Left ventricle myocardium superior (tissue), 1 donor: ENCODE measurements at regions of chr1 and their contacts with region 1.

Region 1: DNA sequence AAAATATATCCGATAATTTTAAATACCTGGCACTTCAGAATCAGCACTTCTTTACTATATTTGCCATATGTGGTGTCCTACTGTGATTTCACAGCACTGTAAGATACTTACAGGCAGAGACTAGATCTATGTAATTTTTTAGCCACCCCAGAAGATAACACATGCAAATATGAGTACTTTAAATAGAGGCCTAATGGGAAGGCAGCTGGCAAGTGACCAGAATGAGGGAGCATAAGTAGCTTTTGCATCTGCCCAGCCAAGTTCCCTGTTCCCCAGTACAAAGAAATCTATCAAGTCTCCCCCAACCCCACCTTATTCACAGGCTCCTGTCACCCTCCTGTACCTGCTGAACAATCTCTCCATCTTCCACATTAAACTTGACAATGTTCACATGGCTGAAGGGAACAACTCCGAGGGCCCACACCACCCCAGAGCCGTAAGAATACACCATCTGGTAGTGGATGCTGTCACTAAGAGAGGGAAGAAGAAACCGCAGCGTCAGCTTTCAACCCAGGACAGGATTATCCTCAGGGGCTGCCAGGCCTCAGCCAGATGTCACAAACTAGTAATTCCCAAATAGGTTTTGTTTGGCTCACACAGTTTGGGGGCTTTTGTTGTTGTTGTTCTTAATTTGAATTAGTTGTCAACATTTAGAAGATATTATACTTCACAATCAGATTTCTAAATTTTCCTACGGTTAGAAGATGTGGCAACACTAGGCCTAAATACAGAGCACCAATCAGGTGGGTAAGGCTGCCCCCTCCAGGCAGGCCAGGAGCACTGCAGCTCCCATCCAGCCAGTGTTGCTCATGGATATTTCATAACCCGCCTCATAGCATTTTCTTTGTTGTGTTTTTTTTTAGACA is 10.4 kb downstream of the EMC1 start:
- DNase-seq: peak; percentile 62
- ATAC-seq: peak; percentile 89

Region 2: DNA sequence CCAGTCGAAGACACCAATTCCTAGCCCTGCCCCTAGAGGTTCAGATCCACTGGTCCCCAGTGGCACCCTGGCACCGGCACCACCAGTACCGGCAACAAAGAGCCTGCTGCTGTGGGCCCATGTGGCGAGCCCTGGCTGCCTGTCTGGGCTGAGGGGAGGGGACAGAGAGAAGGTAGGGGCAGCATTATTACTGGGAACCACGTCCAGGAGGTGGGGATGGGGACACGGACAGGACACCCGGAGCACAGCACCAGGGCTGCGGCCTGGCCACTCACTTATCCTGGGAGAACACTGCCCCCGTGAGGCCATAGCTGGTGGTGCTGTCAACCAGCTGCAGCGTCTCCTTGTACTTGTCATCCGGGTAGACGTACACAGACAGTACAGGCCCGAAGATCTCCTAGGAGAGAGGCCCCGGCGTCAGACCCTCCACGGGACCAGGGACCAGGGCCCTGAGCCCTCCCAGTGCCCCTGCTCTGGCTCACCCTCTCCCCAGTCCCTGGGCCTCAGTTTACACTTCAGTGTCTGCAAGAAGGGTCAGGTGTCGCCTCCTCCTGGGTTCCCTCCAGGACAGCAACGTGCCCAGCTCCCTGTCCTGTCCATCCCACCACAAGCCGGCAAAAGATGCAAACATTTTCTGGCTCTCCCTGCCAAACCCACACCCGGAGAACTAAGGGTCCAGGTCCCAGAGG is 365.7 kb before region 1 on chr1:
- intact Hi-C with region 1: loop called (anchors 5 kb)
- DNase-seq: peak; percentile 85
- ATAC-seq: peak; percentile 80

Region 3: DNA sequence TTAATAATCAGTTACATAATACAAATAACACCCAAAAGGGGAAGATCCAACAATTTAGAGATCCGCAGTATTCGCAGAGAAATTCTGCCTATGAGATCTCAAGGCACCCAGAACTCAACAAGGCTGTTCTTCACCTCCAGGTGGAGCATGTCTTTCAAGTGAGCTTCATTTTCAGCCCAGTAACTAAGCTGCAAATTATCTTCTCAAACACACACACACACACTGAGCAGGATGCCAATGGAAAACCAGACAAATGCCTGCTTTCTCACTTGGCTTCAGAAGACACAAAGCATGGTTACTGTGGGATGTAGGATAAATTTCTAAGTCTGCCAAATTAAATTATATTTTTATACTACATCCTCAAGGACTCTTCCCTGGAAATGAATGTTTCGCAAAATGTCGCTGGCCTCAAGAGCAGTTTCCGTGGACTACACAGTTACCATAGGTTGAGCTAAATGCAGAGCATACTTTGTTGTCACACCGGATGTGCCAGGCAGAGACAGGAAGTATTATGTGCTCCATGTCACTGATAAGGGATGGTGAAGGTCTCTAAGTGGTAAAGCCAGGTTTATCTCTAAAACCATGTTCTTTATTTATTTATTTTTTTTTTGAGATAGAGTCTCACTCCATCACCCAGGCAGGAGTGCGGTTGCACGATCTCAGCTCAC is 61.2 kb before region 1 on chr1:
- intact Hi-C with region 1: loop called (anchors 5 kb)
- DNase-seq: no peak
- ATAC-seq: peak; percentile 74

Region 4: DNA sequence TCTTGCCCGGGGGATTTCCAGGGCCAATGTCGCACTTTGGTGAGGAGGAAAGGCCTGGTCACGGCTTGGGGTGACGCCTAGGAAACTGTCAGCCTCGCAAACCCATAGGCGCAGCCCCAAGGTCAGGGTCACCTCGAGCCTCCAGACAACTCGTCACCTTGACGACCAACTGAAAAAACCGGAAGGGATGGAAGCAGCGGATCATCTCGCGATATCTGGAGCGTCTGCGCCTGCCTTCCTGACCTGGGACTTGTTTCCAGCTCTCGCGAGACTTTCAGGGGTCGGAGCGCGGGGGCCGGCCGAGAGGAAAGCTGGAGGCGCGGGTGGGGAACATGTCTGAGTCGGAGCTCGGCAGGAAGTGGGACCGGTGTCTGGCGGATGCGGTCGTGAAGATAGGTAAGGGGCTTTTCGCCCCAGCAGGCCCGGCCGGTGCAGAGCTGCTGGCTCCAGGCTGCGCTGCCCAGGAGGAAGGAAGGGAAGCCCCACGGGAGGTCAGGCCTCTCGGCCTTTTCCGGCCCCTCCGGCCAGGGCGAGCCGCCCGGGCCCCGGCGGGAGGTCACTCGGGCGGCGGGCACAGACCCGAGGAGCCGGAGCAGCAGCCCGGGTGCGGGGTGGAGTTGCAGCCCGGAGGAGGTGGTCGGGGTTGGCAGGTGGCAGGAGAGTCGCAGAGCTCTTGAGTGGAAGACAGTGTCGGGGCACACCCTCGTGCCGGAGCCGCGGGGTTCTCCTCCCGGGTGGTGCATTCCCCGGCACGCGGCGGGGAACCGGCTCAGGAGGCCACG is 356.0 kb after region 1 on chr1:
- intact Hi-C with region 1: no loop called
- DNase-seq: peak; percentile 96
- ATAC-seq: peak; percentile 92